Pancreas (tissue), 10 donors: ENCODE measurements at regions of chr22 and their contacts with region 1.

Region 1: GRCh38 chr22:17272511-17272991 is 53.3 kb upstream of the ADA2 start:
- DNase-seq: peak in 1 of 6 donors; percentile 2
- ATAC-seq: no peak
- H3K4me3 ChIP-seq: no peak overlapping the region
- H3K27ac ChIP-seq: no peak overlapping the region
- H3K4me1 ChIP-seq: no peaks in the 10 kb centered on the region
- H3K27me3 ChIP-seq: no peaks in the 10 kb centered on the region
- CTCF ChIP-seq: no peak

Region 2: GRCh38 chr22:17043521-17043920 is 229.0 kb before region 1 on chr22:
- intact Hi-C with region 1: no loop called
- DNase-seq: no peak
- ATAC-seq: no peak
- H3K4me3 ChIP-seq: no peak overlapping the region
- H3K27ac ChIP-seq: no peak overlapping the region
- H3K4me1 ChIP-seq: no peaks in the 10 kb centered on the region
- H3K27me3 ChIP-seq: peaks cover 0 to 7% (median 0%) of the 10 kb centered on the region in 4 donors
- CTCF ChIP-seq: no peak

Region 3: DNA sequence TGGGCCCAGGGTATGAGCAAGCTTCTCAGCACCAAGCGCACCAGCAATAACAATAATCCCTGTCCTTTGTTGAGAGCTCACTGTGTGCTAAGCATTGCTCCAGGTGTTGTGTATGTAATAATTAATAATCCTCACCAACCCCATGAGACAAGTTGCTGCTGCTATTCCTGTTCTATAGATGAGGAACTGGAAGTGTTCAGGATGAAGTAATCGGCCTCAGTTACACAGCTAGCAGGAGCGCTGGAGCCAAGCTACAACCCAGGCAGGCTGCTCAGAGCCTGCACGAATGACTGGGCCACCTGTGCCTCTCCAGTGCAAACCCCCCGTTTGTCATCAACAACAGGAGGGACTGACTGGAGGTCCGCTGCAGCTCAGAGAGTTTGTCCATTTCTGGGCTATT is 61.5 kb after region 1 on chr22:
- intact Hi-C with region 1: no loop called
- DNase-seq: no peak
- ATAC-seq: no peak
- H3K4me3 ChIP-seq: no peak overlapping the region
- H3K27ac ChIP-seq: no peak overlapping the region
- H3K4me1 ChIP-seq: no peaks in the 10 kb centered on the region
- H3K27me3 ChIP-seq: no peaks in the 10 kb centered on the region
- CTCF ChIP-seq: no peak

Region 4: DNA sequence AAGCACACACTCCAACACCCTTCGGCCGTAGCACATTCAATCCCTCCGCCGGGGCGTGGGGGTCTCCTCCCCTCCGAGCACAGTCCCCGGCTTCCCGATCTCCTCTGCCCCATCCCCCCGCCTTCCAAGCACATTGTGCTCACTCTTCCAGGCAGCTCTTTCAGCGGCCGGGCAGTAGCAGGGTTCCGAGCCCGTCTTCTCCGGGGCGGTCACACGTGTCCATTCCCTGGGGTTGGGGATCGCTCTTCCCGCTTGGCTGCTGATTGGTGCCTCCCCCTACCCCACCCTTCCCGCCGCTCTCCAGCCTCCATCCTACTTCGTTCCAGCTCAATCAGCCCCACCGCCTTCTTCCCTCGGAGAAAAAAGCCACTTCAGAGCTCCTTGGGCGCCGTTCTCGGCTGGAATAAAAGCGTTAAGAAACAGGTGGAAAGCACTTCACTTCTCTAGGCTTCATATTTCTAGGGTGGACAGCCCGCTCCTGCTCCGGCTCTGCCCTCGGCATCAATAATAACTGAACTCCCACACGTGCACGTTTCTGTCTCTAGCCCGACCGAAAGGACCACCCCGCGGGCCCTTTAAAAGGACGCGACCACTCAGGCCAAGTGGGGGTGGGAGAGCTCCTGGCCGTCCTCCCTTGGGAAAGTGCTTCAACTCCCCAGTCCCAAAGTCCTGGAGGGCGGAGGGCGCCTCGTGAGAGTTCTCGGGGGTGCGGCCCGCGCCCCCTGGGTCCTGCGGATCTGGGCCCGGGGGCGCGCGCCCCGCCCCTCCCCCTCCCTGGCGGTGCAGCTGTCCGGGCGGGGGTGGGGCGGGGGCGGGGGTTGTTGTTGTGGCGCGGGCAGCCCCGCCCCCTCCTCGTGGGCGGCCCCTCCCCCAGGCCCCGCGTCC is 96.2 kb after region 1 on chr22:
- intact Hi-C with region 1: loop called in 1 of 3 experiments (anchors 10 kb)
- DNase-seq: peak; percentile 43 to 71 (median 56)
- ATAC-seq: peak; percentile 77 to 84 (median 82)
- H3K4me3 ChIP-seq: peak overlapping the region; percentile 28 to 67 (median 46)
- H3K27ac ChIP-seq: peak overlapping the region; percentile 73 to 82 (median 78)
- H3K4me1 ChIP-seq: peaks cover 0 to 7% (median 0%) of the 10 kb centered on the region in 3 donors
- H3K27me3 ChIP-seq: peaks cover 0 to 6% (median 0%) of the 10 kb centered on the region in 4 donors
- CTCF ChIP-seq: no peak